CD14-positive monocyte (primary cell): ENCODE measurements at regions of chr18 and their contacts with region 1.

Region 1: GRCh38 chr18:10304853-10305252 is 149.6 kb upstream of the APCDD1 start:
- DNase-seq: peak; percentile 77 to 88 (median 83)
- H3K4me3 ChIP-seq: no peak overlapping the region
- H3K4me3 Mint-ChIP-seq: no peak overlapping the region
- H3K27ac ChIP-seq: peak overlapping the region in 1 of 2 donors; percentile 6
- H3K27ac Mint-ChIP-seq: peak overlapping the region in 5 of 7 donors; percentile 16 to 79 (median 63)
- H3K4me1 ChIP-seq: peaks cover 36 to 40% of the 10 kb centered on the region in 2 donors
- H3K4me1 Mint-ChIP-seq: peaks cover 42% of the 10 kb centered on the region
- H3K27me3 ChIP-seq: no peaks in the 10 kb centered on the region
- H3K27me3 Mint-ChIP-seq: no peaks in the 10 kb centered on the region
- CTCF ChIP-seq: no peak

Region 2: DNA sequence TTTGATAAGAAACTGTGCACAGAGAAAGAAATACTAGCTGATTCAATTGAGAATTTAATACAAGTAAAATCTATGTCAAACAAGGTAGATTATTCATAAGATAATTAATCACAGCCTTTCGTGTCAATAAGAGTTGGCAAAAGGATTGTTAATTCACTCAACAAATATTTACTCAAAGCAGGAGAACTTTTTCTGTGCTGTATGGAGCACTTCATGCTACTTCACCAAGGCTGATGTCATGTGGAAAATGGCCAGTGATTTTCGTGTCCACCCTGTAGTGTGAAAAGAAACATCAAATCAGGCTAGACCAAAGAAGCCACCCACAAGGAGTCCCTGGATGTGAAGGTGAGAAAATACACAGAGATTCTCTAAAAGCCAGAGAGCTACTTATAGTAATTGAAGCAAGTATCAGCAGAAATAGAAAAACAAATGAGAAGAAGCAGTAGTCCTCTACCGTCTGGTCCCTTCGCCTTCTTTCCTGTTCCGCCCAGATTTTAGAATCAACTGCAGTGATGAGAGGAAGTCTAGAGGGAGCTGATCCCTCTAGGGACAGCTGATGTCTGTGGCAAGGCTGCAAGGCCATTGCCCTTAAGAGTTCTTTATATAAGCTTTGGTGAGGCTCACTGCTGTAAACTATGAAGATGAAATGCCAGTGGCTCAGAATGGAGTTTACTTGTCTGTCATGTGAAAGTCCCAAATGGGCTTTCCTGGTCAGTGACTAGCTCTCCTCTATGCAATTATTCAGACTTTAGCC is 51.7 kb before region 1 on chr18:
- intact Hi-C with region 1: loop called in 1 of 2 experiments (anchors 5 kb)
- DNase-seq: peak in 2 of 3 donors; percentile 19 to 29
- H3K4me3 ChIP-seq: no peak overlapping the region
- H3K4me3 Mint-ChIP-seq: peak overlapping the region in 1 of 2 donors; percentile 35
- H3K27ac ChIP-seq: peak overlapping the region in 1 of 2 donors; percentile 32
- H3K27ac Mint-ChIP-seq: peak overlapping the region in 4 of 7 donors; percentile 0 to 47 (median 19)
- H3K4me1 ChIP-seq: peaks cover 42 to 46% of the 10 kb centered on the region in 2 donors
- H3K4me1 Mint-ChIP-seq: peaks cover 46% of the 10 kb centered on the region
- H3K27me3 ChIP-seq: no peaks in the 10 kb centered on the region
- H3K27me3 Mint-ChIP-seq: peaks cover 0 to 8% (median 0%) of the 10 kb centered on the region in 3 donors
- CTCF ChIP-seq: no peak

Region 3: GRCh38 chr18:10261302-10262276 is 43.3 kb before region 1 on chr18:
- intact Hi-C with region 1: loop called in 1 of 2 experiments (anchors 2 kb)
- DNase-seq: peak; percentile 68 to 81 (median 72)
- H3K4me3 ChIP-seq: peak overlapping the region in 1 of 3 experiments; percentile 26
- H3K4me3 Mint-ChIP-seq: peak overlapping the region in 1 of 2 donors; percentile 46
- H3K27ac ChIP-seq: peak overlapping the region; percentile 5 to 81
- H3K27ac Mint-ChIP-seq: peak overlapping the region; percentile 81 to 91 (median 89)
- H3K4me1 ChIP-seq: peaks cover 42 to 54% of the 10 kb centered on the region in 2 donors
- H3K4me1 Mint-ChIP-seq: peaks cover 47% of the 10 kb centered on the region
- H3K27me3 ChIP-seq: no peaks in the 10 kb centered on the region
- H3K27me3 Mint-ChIP-seq: peaks cover 0 to 3% (median 0%) of the 10 kb centered on the region in 3 donors
- CTCF ChIP-seq: no peak

Region 4: GRCh38 chr18:10289951-10290637 is 14.8 kb before region 1 on chr18:
- intact Hi-C with region 1: loop called in 1 of 2 experiments (anchors 2 kb)
- DNase-seq: peak; percentile 72 to 85 (median 74)
- H3K4me3 ChIP-seq: peak overlapping the region; percentile 8 to 51 (median 18)
- H3K4me3 Mint-ChIP-seq: peak overlapping the region; percentile 43 to 77
- H3K27ac ChIP-seq: peak overlapping the region; percentile 93 to 99
- H3K27ac Mint-ChIP-seq: peak overlapping the region; percentile 93 to 98 (median 97)
- H3K4me1 ChIP-seq: peaks cover 73 to 75% of the 10 kb centered on the region in 2 donors
- H3K4me1 Mint-ChIP-seq: peaks cover 86% of the 10 kb centered on the region
- H3K27me3 ChIP-seq: no peaks in the 10 kb centered on the region
- H3K27me3 Mint-ChIP-seq: peaks cover 0 to 5% (median 2%) of the 10 kb centered on the region in 3 donors
- CTCF ChIP-seq: no peak

Region 5: DNA sequence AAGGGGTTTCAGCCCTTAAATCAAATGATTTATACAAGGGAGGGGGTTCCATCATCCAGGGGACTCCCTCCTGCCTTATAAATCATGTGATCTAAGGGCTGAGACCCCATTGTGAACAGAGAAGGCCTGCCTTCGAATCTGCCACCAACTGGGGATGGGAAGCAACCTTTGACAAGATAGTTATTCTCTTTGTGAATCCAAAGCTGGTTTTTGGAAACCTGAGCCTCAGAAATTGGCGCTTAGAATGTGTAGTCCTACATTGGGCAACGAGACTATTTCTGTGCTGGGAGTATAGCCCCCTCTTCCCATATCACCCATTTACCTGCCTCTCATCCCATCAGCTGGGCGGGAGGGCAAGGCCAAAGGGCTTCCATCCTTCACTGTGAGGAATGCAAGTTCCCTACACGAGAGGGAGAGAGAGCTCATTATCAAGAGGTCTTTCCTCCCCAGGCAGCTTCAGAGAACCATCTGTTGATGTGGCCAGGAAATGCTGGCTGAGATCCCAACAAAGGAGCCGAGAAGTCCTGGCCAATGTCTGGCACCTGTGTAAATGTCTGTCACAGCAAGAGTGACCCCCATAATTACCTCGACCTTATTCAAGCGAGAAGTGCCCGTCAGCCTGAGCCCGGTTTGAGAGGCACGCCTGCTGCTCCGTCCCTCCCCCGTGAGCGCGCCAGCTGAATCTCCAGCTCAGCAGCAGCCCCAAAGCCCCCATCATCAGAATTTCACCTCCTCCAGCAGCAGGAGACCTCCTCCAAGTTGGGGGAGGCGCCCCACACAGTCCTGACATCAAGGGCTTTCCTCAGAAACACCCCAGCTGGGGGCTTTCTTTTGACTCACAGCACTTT is 101.2 kb after region 1 on chr18:
- intact Hi-C with region 1: loop called in 1 of 2 experiments (anchors 5 kb)
- DNase-seq: no peak
- H3K4me3 ChIP-seq: no peak overlapping the region
- H3K4me3 Mint-ChIP-seq: no peak overlapping the region
- H3K27ac ChIP-seq: no peak overlapping the region
- H3K27ac Mint-ChIP-seq: no peak overlapping the region
- H3K4me1 ChIP-seq: peaks cover 15 to 19% of the 10 kb centered on the region in 2 donors
- H3K4me1 Mint-ChIP-seq: peaks cover 14% of the 10 kb centered on the region
- H3K27me3 ChIP-seq: no peaks in the 10 kb centered on the region
- H3K27me3 Mint-ChIP-seq: peaks cover 2 to 6% (median 4%) of the 10 kb centered on the region in 3 donors
- CTCF ChIP-seq: no peak